Endothelial cell of umbilical vein (primary cell): ENCODE measurements at regions of chr1 and their contacts with region 1.

Region 1: DNA sequence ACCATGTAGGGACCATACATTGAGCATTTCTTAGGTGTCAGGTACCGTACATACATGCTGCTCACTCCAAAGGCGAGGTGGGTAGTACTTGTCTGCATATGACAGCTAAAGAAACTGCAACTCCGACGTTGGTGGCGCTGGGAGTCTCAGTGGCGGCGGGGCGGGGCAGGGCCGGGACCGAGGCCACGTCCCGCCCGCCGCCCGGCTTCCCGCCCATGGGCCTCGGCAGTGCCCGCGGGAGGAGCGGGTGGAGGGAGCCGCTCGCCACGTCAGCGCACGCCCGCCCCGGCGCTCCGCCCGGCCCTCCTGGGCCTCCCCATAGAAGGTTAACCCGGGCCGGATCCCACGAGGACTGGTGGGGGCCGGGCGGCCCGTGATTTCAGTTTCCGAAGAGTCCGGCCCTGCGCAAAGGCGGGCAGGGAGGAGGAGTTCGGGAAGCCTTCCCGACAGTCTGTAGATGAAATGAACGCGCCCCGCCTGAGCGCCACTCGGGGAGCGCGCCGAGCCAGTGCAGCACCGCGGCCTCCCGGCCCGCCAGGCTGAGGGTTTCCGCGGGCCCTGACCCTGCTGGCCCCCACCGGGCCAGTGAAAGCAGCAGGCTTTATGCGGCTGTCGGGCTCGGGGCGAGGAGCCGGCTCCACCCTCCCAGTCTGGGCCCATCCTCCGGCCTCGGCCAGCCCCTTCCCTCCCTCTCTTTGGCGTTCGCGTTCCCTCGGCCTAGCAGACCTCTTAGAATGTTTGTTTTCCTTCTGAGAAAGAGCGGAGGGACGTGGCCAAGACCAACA is 119.9 kb upstream of the JUN start:
- DNase-seq: peak; percentile 94
- H3K4me3 ChIP-seq: peak overlapping the region in 2 of 3 experiments; percentile 24 to 41
- H3K27ac ChIP-seq: peak overlapping the region; percentile 64
- H3K4me1 ChIP-seq: peaks cover 46% of the 10 kb centered on the region
- H3K27me3 ChIP-seq: no peaks in the 10 kb centered on the region
- CTCF ChIP-seq: no peak
- POLR2A ChIP-seq: peak; percentile 95

Region 2: DNA sequence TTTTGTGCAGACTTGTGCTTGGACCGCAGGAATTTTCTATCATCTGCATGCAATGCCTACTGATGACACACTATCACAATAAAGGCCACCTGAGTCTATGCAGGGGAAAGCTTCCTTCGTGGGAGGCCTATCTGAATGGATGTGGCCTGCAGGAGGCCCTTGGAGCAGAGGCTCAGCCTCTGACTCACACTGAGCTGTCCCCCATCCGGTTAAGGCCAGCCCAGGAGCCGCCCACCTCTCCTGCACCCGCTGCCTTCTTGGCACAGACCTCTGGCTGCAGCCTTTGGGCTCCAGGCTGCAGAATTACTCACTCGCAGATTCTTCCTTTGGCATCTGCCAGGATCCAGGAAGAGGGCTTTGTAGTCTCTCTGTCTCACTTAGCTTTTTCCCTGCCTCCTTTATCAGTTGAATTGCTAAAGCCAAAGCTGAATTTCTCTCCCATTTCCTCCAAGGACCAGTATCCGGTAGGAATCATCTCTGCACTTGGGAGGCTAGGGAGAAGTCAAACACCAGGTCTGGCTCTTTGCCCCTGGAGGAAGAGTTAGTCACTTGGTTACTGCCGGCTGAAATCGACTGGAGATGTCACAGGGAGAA is 54.8 kb before region 1 on chr1:
- CTCF ChIA-PET with region 1: interaction called, 5 read pairs
- POLR2A ChIA-PET with region 1: no interaction called
- dilution Hi-C with region 1: no loop called
- intact Hi-C with region 1: loop called (anchors 1 kb)
- DNase-seq: peak; percentile 95
- H3K4me3 ChIP-seq: no peak overlapping the region
- H3K27ac ChIP-seq: peak overlapping the region; percentile 95
- H3K4me1 ChIP-seq: peaks cover 30% of the 10 kb centered on the region
- H3K27me3 ChIP-seq: no peaks in the 10 kb centered on the region
- CTCF ChIP-seq: peak; percentile 8 to 24
- POLR2A ChIP-seq: no peak

Region 3: DNA sequence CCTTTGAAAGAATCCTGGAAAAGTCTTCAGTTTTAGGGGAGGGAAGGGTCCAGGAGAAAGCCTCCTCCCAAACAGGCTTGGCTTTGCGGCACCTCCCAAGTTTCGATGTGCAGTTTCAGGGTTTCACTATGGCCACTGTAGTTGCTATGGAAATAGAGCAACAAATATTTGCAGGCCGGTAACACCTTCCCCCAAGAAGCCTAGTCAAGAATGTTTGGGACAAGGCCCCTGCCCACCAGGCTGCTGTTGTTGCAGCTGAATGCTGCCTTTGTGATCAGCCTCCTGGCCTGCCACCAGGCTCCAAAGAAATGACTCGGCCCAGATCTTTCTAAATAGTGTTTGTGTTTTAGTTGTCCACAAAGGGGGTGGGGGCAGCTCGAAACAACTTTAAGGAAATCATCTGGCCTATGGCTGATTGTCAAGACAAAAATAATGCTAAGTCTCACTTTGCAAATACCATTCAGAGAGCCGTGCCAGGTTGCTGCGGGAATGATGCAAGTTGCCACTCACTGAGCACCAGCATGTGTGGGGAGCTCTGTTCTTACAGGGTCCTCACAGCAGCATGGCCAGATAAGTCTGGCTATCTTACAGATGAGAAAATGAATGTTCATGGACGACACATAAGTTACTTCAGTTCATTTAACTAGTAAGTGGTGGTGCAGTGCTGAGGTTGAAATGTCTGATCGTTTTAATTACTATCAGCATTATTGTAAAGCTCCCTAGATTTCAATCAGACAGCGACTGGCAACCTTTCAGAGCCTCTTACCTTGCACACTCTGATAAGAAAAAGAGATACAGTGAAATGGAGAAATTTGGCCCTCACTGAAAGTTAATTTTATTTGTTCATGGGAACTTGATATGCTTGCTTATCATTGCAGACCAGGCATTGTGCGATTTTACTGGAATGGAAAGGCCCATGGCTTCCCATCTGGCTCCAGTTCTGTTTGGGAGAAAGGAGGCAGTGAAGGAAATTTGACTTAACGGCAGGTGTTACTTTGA is 28.6 kb before region 1 on chr1:
- CTCF ChIA-PET with region 1: no interaction called
- POLR2A ChIA-PET with region 1: no interaction called
- dilution Hi-C with region 1: no loop called
- intact Hi-C with region 1: no loop called
- DNase-seq: peak; percentile 78
- H3K4me3 ChIP-seq: no peak overlapping the region
- H3K27ac ChIP-seq: no peak overlapping the region
- H3K4me1 ChIP-seq: peaks cover 7% of the 10 kb centered on the region
- H3K27me3 ChIP-seq: no peaks in the 10 kb centered on the region
- CTCF ChIP-seq: no peak
- POLR2A ChIP-seq: no peak